ENCODE measurements at regions of chr19 and their contacts with region 1.

Region 1: DNA sequence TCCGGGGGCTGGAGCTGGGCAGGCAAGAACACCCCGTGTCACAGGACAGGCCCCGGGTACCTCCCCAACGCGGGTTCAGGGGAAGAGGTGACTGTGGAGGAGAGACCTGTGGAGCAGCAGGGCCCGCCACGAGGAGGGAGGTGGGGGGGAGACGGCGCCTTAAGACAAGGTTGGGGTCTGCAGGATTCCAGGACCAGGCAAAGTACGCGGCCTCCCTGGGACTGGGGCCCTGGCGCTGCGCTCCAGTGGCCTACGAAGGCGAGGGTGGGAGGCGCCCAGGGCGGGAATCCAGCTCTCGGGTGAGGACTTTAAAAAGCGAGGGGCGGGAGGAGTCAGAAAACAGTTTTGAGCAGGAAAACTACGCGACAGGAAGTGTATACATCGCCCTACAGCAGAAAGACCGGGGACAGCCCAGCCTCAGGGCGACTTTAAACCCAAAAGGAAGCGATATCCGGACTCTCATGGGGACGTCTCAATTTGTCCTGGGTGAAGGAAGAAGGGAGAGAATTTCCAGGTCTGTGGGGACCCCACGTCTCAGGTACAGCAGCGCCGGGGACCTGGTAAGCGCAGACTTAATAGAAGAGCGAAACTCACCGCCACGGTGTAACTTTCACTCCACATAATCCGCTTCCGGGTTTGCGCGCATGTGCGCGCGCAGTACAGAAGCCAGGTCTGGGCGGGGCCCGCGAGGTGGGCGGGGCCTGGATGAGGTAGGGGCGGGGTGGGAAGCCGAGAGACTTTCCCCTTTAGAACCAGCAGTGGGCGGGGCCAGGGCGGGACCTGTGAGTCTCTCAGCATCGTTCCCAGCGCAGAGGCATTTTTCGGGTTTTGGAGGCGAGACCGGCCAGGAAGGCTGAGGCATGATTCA is at the start of gene ZNF83:
- DNase-seq: peak; percentile 80 to 82
- ATAC-seq: peak; percentile 90 to 95
- H3K4me3 ChIP-seq: peak within 1 kb of the TSS; percentile 62 to 74 (median 72)
- H3K27ac ChIP-seq: peak within 1 kb of the TSS; percentile 61 to 77 (median 67)
- H3K4me1 ChIP-seq: peaks cover 0 to 11% of the 10 kb centered on the region in 2 donors
- H3K27me3 ChIP-seq: peaks cover 0 to 6% (median 4%) of the 10 kb centered on the region in 3 donors
- CTCF ChIP-seq: no peak
- POLR2A ChIP-seq: peak in 1 of 2 donors; percentile 13
- total RNA-seq, gene ZNF83: 2.8 to 8.0 (median 4.0) TPM

Region 2: GRCh38 chr19:52590728-52591127 is 47.2 kb before region 1 on chr19:
- in situ Hi-C with region 1: no loop called
- intact Hi-C with region 1: no loop called
- DNase-seq: no peak
- ATAC-seq: no peak
- H3K4me3 ChIP-seq: no peak overlapping the region
- H3K27ac ChIP-seq: no peak overlapping the region
- H3K4me1 ChIP-seq: no peaks in the 10 kb centered on the region
- H3K27me3 ChIP-seq: no peaks in the 10 kb centered on the region
- CTCF ChIP-seq: no peak
- POLR2A ChIP-seq: no peak

Region 3: GRCh38 chr19:52690369-52691214 is 52.6 kb after region 1 on chr19:
- in situ Hi-C with region 1: no loop called
- intact Hi-C with region 1: loop called (anchors 2 kb)
- DNase-seq: peak; percentile 76 to 82
- ATAC-seq: peak; percentile 89 to 92
- H3K4me3 ChIP-seq: peak overlapping the region; percentile 57 to 70 (median 60)
- H3K27ac ChIP-seq: peak overlapping the region; percentile 81 to 84 (median 82)
- H3K4me1 ChIP-seq: peaks cover 3 to 8% of the 10 kb centered on the region in 2 donors
- H3K27me3 ChIP-seq: peaks cover 0 to 6% (median 3%) of the 10 kb centered on the region in 3 donors
- CTCF ChIP-seq: peak in 2 of 5 experiments; percentile 26 to 34
- POLR2A ChIP-seq: peak; percentile 38 to 72

Measured in gastrocnemius medialis (tissue), 4 donors.